ENCODE measurements at regions of chr11 and their contacts with region 1.

Region 1: GRCh38 chr11:63567044-63567840 is 4.1 kb upstream of the PLAAT2 start:
- DNase-seq: peak; percentile 72
- ATAC-seq: peak; percentile 84
- H3K4me3 Mint-ChIP-seq: peak overlapping the region; percentile 45
- H3K27ac Mint-ChIP-seq: peak overlapping the region; percentile 94
- H3K4me1 Mint-ChIP-seq: peaks cover 50% of the 10 kb centered on the region
- H3K27me3 Mint-ChIP-seq: no peaks in the 10 kb centered on the region

Region 2: GRCh38 chr11:63445720-63446119 is 121.5 kb before region 1 on chr11:
- CTCF ChIA-PET with region 1: interaction called, 4 read pairs
- POLR2A ChIA-PET with region 1: interaction called, 7 read pairs
- intact Hi-C with region 1: loop called (anchors 2 kb)
- DNase-seq: peak; percentile 45
- ATAC-seq: peak; percentile 61
- H3K4me3 Mint-ChIP-seq: no peak overlapping the region
- H3K27ac Mint-ChIP-seq: no peak overlapping the region
- H3K4me1 Mint-ChIP-seq: peaks cover 35% of the 10 kb centered on the region
- H3K27me3 Mint-ChIP-seq: peaks cover 7% of the 10 kb centered on the region

Region 3: GRCh38 chr11:63508009-63508408 is 59.2 kb before region 1 on chr11:
- CTCF ChIA-PET with region 1: no interaction called
- POLR2A ChIA-PET with region 1: no interaction called
- intact Hi-C with region 1: no loop called
- DNase-seq: peak; percentile 39
- ATAC-seq: no peak
- H3K4me3 Mint-ChIP-seq: no peak overlapping the region
- H3K27ac Mint-ChIP-seq: no peak overlapping the region
- H3K4me1 Mint-ChIP-seq: peaks cover 2% of the 10 kb centered on the region
- H3K27me3 Mint-ChIP-seq: no peaks in the 10 kb centered on the region

Region 4: DNA sequence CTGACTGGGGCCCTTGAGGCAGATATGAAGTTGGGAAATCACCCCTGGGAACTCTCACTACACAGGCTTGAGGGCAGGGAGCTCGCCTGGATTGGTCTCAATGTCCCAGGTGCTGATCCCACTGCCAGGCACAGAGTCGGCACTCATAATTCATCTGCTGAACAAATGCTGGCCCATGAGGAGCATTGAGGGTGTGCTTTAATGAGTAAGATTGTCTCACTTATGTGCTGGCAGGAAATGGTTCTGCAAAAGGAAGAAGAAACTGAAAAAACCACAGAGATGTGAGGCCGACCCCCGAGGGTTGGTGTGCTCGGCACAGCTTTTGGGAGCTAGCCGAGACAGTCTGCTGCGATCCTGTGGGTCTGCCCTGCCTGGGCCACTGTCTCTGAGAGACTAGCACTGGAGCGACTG is 13.5 kb before region 1 on chr11:
- CTCF ChIA-PET with region 1: interaction called, 4 read pairs
- POLR2A ChIA-PET with region 1: interaction called, 3 read pairs
- intact Hi-C with region 1: loop called (anchors 1 kb)
- DNase-seq: peak; percentile 73
- ATAC-seq: peak; percentile 92
- H3K4me3 Mint-ChIP-seq: peak overlapping the region; percentile 60
- H3K27ac Mint-ChIP-seq: peak overlapping the region; percentile 91
- H3K4me1 Mint-ChIP-seq: peaks cover 57% of the 10 kb centered on the region
- H3K27me3 Mint-ChIP-seq: no peaks in the 10 kb centered on the region

Region 5: GRCh38 chr11:63681321-63682049 is 114.2 kb after region 1 on chr11 and contains the start of gene RTN3:
- CTCF ChIA-PET with region 1: no interaction called
- POLR2A ChIA-PET with region 1: no interaction called
- intact Hi-C with region 1: loop called in 1 of 2 experiments (anchors 1 kb)
- DNase-seq: peak; percentile 99
- ATAC-seq: peak; percentile 94
- H3K4me3 Mint-ChIP-seq: peak within 1 kb of the TSS; percentile 90
- H3K27ac Mint-ChIP-seq: peak within 1 kb of the TSS; percentile 89
- H3K4me1 Mint-ChIP-seq: peaks cover 20% of the 10 kb centered on the region
- H3K27me3 Mint-ChIP-seq: no peaks in the 10 kb centered on the region
- total RNA-seq, gene RTN3: 42.2 to 43.0 TPM

Region 6: DNA sequence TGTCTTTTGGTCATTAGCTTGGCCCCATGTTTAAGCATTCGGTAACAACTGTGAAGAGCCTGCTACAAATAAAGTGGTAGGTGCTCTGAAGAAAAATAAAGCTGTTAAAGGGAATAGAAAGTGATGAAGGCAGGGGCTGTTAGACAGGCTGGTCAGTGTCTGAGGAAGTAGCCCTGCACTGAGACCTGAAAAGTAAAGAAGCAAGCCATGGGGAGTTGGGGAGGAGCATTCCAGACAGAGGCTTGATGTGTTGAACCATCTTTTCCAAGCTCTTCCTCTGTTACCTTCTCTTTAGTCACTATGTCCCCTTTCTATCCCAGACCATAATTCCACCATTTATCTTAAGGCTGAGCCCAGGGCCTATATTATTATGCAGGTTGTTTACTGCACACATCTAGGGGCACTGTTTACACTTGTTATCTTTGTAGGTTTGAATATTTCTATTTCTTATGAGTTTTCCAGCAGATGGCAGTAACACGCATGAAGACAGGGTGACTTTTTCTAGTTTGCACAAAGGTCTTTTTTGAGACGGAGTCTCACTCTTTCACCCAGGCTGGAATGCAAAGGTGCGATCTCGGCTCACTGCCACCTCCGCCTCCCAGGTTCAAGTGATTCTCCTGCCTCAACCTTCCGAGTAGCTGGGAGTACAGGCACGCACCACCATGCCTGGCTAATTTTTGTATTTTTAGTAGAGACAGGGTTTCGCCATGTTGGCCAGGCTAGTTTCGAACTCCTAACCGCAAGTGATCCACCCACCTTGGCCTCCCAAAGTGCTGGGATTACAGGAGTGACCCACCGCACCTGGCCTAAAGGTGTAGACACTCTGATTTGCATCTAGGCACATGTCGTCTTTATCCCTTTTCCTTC is 178.3 kb after region 1 on chr11:
- CTCF ChIA-PET with region 1: no interaction called
- POLR2A ChIA-PET with region 1: no interaction called
- intact Hi-C with region 1: no loop called
- DNase-seq: no peak
- ATAC-seq: no peak
- H3K4me3 Mint-ChIP-seq: no peak overlapping the region
- H3K27ac Mint-ChIP-seq: no peak overlapping the region
- H3K4me1 Mint-ChIP-seq: no peaks in the 10 kb centered on the region
- H3K27me3 Mint-ChIP-seq: no peaks in the 10 kb centered on the region

Measured in activated CD4-positive, alpha-beta T cell treated with anti-CD3 and anti-CD28 coated beads for 36 hours (primary cell).